ENCODE measurements at regions of chr15 and their contacts with region 1.

Region 1: DNA sequence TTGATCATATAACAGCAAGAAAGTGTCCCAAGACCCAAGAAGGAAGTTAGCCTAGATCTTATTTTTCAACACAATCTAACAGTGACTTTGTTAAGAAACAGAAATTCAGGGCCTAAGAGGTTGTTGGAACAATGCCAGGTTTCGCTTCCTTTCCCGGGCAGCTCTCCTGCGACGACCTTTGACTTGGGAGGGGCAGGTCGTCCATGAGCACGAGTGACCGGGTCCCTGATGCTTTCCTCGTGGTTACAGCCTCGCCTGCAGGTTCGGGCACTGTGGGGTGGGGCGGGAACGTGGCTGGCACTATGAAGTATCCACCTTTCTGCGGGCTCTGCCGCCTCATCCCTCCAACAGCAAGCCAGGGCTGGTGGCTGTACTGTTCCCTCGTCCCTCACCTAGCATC is 90.1 kb upstream of the RGMA start:
- DNase-seq: peak in 1 of 2 donors; percentile 79
- ATAC-seq: no peak
- H3K4me3 ChIP-seq: no peak overlapping the region
- H3K27ac ChIP-seq: no peak overlapping the region
- H3K4me1 ChIP-seq: no peaks in the 10 kb centered on the region
- H3K27me3 ChIP-seq: no peaks in the 10 kb centered on the region

Region 2: GRCh38 chr15:93001881-93002280 is 177.2 kb before region 1 on chr15:
- intact Hi-C with region 1: no loop called
- DNase-seq: no peak
- ATAC-seq: no peak
- H3K4me3 ChIP-seq: no peak overlapping the region
- H3K27ac ChIP-seq: no peak overlapping the region
- H3K4me1 ChIP-seq: no peaks in the 10 kb centered on the region
- H3K27me3 ChIP-seq: no peaks in the 10 kb centered on the region

Region 3: GRCh38 chr15:93235926-93236780 is 57.1 kb after region 1 on chr15:
- intact Hi-C with region 1: loop called in 1 of 2 experiments (anchors 10 kb)
- DNase-seq: peak in 1 of 2 donors; percentile 81
- ATAC-seq: peak; percentile 40
- H3K4me3 ChIP-seq: no peak overlapping the region
- H3K27ac ChIP-seq: no peak overlapping the region
- H3K4me1 ChIP-seq: no peaks in the 10 kb centered on the region
- H3K27me3 ChIP-seq: no peaks in the 10 kb centered on the region

Region 4: GRCh38 chr15:93694033-93694432 is 515.0 kb after region 1 on chr15:
- intact Hi-C with region 1: no loop called
- DNase-seq: no peak
- ATAC-seq: no peak
- H3K4me3 ChIP-seq: no peak overlapping the region
- H3K27ac ChIP-seq: no peak overlapping the region
- H3K4me1 ChIP-seq: no peaks in the 10 kb centered on the region
- H3K27me3 ChIP-seq: no peaks in the 10 kb centered on the region